ENCODE measurements at regions of chr11 and their contacts with region 1.

Region 1: DNA sequence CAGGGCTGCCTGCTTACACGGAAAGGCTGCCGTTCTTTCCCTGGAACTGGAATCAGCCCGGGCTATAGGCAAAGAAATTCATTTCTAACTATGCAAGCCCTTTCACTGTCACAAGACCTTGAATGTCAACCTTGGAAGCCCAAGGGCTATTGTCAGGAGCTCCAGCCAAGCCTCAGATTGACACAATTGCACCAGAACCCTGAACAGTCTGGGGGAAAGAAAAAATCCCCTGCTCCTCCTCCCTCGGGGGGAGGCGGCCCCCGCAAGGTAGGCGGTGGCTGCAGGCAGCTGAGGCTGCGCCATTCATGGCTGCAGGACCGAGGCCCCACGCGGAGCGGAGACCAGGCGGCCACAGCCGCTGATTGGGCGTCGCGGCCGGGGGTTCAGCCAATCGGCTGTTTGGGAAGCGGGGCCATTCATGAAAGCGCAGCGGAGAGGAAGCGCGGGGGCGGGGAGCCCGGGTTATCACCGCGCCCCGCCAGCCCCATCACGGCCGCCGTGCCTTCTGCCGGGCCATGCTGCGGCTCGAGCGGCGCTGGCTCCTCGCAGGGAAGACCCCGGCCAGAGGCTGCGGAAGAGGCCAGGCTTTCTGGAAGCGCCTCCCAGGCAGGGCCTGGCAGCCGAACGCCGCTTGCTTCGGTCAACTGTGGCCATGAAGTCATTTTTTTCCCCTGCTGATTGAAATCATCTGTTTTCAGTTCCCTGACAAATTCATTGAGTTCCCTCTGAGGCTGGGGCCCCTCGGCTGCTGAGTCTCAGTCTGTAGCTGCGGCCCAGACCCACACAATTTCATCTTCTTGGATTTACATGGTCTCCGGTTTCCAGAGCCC is 38.1 kb upstream of the LINC01488 start:
- DNase-seq: peak; percentile 96
- H3K4me3 ChIP-seq: peak overlapping the region; percentile 27
- CTCF ChIP-seq: no peak

Region 2: GRCh38 chr11:69368119-69368881 is 75.1 kb before region 1 on chr11:
- in situ Hi-C with region 1: loop called (anchors 10 kb)
- DNase-seq: no peak
- H3K4me3 ChIP-seq: no peak overlapping the region
- CTCF ChIP-seq: no peak

Region 3: DNA sequence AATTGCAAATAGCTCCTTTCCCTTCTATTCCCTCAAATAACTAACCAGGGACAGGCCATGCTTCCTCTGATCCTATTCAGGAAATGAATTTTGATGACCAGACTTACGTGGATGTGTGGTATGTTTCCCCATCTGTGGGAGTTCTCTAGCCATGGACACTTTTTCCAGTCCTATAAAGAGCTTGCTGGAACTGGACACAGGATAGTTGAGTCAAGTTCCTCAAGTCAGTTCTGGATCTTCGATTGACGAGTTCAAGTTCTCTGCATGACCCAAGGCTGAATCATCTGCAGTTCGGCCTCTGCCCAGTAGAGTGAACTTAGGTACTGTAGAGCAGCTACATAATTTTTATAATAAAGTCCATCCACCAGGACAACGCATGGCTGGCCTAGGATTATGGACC is 144.9 kb after region 1 on chr11:
- in situ Hi-C with region 1: no loop called
- DNase-seq: peak; percentile 61
- H3K4me3 ChIP-seq: no peak overlapping the region
- CTCF ChIP-seq: peak; percentile 44

Region 4: DNA sequence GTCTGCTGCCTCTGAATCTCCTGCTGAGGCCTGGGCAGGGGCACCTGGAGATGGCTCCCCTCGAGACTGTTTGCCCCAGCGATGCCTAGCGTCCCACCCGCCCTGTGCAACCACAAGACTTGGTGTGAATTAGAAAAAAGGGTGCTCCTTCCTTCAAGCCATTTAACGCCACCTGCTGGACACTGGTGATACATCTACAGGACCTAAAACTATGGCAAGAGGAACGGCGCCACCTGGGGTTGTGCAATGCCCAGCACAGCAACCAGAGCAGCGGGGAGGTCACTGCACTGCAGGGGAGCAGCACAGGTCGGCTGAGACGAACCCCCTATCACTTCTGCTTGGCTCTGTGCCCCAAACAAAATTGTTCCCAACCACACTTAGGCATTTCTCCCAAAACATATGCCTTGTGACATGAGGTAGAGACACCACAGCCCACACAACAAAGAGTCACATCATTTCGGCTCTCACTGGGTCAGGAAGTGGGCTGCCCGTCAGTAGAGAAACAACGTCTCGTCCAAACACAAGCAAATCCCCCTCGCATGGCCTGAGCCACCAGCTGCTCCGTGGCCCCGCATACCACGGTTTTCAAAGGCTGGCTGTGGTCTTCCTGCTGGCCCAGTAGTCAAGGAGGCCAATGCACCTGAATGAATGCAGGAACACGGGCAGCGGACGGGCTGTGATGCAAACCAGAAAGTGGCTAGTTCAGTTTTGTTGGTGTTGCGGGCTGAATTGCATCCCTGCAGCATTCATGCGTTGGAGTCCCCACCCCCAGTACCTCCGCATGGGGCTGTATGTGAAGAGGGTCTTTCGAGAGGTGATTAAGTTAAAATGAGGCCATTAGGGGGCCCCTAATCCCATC is 1637.1 kb after region 1 on chr11:
- in situ Hi-C with region 1: no loop called
- DNase-seq: peak; percentile 58
- H3K4me3 ChIP-seq: no peak overlapping the region
- CTCF ChIP-seq: peak; percentile 74